ENCODE measurements at regions of chr6 and their contacts with region 1.

Region 1: GRCh38 chr6:163585932-163586437 is 171.5 kb downstream of the QKI start:
- DNase-seq: peak; percentile 49 to 68
- ATAC-seq: peak; percentile 65 to 90 (median 79)
- H3K4me3 ChIP-seq: peak overlapping the region in 2 of 10 donors; percentile 1 to 8
- H3K27ac ChIP-seq: peak overlapping the region in 8 of 10 donors; percentile 27 to 63 (median 47)
- H3K4me1 ChIP-seq: peaks cover 4 to 58% (median 28%) of the 10 kb centered on the region in 9 donors
- H3K27me3 ChIP-seq: no peaks in the 10 kb centered on the region
- CTCF ChIP-seq: no peak

Region 2: GRCh38 chr6:163405412-163406309 is 180.3 kb before region 1 on chr6:
- intact Hi-C with region 1: no loop called
- DNase-seq: peak; percentile 68 to 69
- ATAC-seq: peak; percentile 86 to 93 (median 91)
- H3K4me3 ChIP-seq: peak overlapping the region in 9 of 10 donors; percentile 13 to 50 (median 39)
- H3K27ac ChIP-seq: peak overlapping the region; percentile 75 to 95 (median 92)
- H3K4me1 ChIP-seq: peaks cover 11 to 51% (median 32%) of the 10 kb centered on the region in 9 donors
- H3K27me3 ChIP-seq: no peaks in the 10 kb centered on the region
- CTCF ChIP-seq: no peak

Region 3: DNA sequence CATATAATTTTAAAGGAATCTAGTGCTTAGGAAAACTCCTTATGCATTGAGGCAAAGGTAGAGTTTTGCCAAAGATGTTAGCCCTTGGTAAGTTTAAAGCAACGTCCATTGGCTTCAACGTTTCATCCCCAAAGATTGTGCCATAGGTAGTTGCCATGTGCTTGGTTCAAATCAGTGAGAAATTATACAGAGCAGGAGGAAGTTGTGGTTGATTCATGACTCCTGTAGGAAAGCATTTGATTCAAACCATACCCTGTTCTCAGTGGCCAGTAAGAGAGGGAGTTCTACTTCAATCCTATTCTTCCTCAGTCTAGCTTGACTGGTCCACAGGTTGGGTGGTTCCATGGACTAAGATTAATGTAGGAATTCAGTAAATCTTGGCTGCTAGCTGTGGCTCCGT is 364.2 kb after region 1 on chr6:
- intact Hi-C with region 1: loop called in 6 of 10 experiments (anchors 5 to 10 kb)
- DNase-seq: no peak
- ATAC-seq: no peak
- H3K4me3 ChIP-seq: no peak overlapping the region
- H3K27ac ChIP-seq: no peak overlapping the region
- H3K4me1 ChIP-seq: peaks cover 0 to 15% (median 0%) of the 10 kb centered on the region in 9 donors
- H3K27me3 ChIP-seq: peaks cover 0 to 4% (median 0%) of the 10 kb centered on the region in 7 donors
- CTCF ChIP-seq: no peak

Measured in heart right ventricle (tissue), 16 donors.